Mucosa of descending colon (tissue), 3 donors: ENCODE measurements at regions of chr15 and their contacts with region 1.

Region 1: DNA sequence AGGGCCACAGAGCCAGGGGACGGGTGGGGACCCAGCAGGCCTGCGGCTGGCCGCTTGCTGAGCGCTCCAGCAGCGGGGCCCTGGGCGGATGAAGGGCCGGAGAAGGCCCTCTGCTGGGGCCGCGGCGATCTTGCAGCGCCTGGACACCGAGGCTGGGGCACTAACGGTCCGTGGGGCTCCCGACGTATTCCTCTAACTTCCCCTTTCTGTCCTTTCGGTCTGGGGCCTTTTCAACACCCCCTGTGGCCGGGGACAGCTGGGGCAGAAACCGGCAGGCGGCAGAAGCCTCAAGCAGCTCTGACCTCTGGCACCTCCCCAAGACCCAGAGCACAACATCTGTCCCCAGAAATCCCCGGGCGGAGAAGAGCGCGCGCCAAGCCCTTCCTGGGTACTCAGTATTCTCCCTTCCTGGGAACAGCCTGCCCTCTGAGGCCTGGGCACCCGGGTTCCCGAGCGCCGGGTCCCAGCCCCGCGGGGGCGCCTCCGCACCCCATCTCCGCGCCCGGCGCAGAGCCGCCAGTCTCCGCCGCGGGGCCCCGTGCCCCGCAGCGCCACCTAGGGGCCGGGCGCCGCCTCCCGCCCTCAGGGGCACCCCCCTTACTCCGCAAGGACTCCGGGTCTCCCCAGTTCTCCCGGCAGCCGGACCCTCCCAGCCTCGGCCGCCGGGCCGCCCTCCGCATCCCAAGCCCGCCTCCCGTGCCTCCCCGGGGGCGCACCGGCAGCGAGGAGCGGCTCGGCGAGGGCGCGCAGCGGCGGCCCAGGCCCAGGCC is 582 bp upstream of the SLCO3A1 start:
- DNase-seq: peak; percentile 70 to 86 (median 83)
- ATAC-seq: peak; percentile 82
- H3K4me3 ChIP-seq: peak overlapping the region; percentile 56
- H3K4me1 ChIP-seq: peaks cover 29% of the 10 kb centered on the region
- CTCF ChIP-seq: peak; percentile 68

Region 2: DNA sequence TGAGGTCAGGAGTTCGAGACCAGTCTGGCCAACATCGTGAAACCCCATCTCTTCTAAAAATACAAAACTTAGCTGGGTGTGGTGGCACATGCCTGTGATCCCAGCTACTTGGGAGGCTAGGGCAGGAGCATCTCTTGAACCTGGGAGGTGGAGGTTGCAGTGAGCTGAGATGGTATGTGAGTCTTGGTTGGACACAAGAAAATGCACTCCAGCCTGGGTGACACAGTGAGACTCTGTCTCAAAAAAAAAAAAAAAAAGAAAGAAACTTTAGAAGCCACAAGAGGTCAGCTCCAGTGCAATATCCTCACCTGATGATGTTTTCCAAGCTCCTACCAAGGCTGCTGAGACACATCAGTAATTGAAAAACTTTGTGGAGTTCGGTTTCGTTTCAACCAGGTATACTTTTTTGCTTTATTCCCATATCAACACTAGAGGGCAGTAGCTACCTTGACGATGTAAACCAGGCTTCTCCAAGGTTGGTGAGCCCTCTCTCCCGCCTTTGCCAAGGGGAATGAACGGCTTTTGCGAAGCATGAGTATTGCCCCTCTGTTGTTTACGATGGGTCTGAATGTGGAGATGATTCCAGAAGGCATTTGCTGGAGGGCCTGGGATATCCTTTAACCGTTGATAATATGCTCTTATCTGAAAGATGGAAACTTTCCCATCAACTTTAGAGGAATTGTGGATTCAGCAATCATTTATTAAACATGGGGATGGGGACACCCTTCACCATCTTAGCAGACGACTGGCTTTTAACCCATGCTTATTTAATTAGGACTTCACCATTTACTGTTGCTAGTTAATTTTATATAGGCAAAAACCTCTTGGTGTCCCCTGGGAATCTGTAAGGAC is 550.1 kb before region 1 on chr15:
- intact Hi-C with region 1: loop called (anchors 5 to 10 kb)
- DNase-seq: peak in 1 of 3 donors; percentile 12
- ATAC-seq: peak; percentile 82
- H3K4me3 ChIP-seq: no peak overlapping the region
- H3K4me1 ChIP-seq: no peaks in the 10 kb centered on the region
- CTCF ChIP-seq: peak; percentile 22

Region 3: GRCh38 chr15:91956026-91956723 is 103.2 kb after region 1 on chr15:
- intact Hi-C with region 1: loop called in 1 of 2 experiments (anchors 10 kb)
- DNase-seq: no peak
- ATAC-seq: no peak
- H3K4me3 ChIP-seq: no peak overlapping the region
- H3K4me1 ChIP-seq: peaks cover 12% of the 10 kb centered on the region
- CTCF ChIP-seq: no peak